Heart left ventricle (tissue), 16 donors: ENCODE measurements at regions of chr1 and their contacts with region 1.

Region 1: GRCh38 chr1:214823311-214824117 is 220.5 kb downstream of the CENPF start:
- DNase-seq: no peak
- ATAC-seq: no peak
- H3K4me3 ChIP-seq: no peak overlapping the region
- H3K27ac ChIP-seq: no peak overlapping the region
- H3K4me1 ChIP-seq: no peaks in the 10 kb centered on the region
- H3K27me3 ChIP-seq: no peaks in the 10 kb centered on the region
- CTCF ChIP-seq: no peak
- POLR2A ChIP-seq: no peak

Region 2: GRCh38 chr1:215497528-215497927 is 674.0 kb after region 1 on chr1:
- intact Hi-C with region 1: loop called in 1 of 10 experiments (anchors 10 kb)
- DNase-seq: no peak
- ATAC-seq: no peak
- H3K4me3 ChIP-seq: no peak overlapping the region
- H3K27ac ChIP-seq: no peak overlapping the region
- H3K4me1 ChIP-seq: no peaks in the 10 kb centered on the region
- H3K27me3 ChIP-seq: peaks cover 0 to 6% (median 0%) of the 10 kb centered on the region in 9 donors
- CTCF ChIP-seq: no peak
- POLR2A ChIP-seq: no peak